RWPE1 (cell line): ENCODE measurements at regions of chr16 and their contacts with region 1.

Region 1: DNA sequence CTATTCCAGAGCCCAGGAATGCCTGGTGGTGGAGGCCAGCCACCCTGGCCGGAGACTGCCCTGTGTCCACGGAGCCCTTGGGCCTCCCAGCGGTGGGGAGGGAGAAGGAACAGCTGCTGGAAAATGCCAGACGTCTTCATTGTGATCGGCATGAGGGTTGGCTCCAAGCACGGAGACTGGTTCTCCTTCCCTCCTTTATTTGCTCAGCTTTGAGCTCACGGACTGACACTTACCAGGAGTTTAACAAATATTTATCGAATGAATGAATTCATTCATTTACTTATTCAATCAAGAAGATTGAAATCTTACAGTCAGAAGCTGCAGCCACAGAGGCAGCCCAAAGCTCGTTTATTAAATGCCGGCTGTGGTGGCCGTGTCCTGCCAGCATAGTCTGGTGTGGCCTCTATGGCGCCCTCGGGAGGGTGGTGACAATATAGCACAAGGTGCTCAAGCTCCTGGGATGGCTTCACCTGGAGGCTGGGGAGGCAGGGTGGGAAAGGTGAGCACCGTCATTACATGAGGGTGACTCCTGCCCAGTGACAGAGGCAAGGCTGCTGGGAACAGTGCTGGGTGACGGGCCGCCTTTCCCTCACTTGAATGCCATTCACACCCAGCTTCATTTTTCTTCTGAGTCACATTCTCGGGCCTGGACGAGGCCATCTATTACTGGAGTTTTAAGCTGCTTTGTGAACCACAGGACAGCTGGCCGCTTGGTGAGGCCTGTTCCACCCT is 31.0 kb upstream of the JPH3 start:
- DNase-seq: no peak
- H3K27ac ChIP-seq: no peak overlapping the region
- CTCF ChIP-seq: peak; percentile 22

Region 2: GRCh38 chr16:87375426-87376135 is 195.7 kb before region 1 on chr16:
- CTCF ChIA-PET with region 1: no interaction called
- POLR2A ChIA-PET with region 1: no interaction called
- DNase-seq: peak; percentile 58
- H3K27ac ChIP-seq: peak overlapping the region; percentile 96
- CTCF ChIP-seq: no peak

Region 3: DNA sequence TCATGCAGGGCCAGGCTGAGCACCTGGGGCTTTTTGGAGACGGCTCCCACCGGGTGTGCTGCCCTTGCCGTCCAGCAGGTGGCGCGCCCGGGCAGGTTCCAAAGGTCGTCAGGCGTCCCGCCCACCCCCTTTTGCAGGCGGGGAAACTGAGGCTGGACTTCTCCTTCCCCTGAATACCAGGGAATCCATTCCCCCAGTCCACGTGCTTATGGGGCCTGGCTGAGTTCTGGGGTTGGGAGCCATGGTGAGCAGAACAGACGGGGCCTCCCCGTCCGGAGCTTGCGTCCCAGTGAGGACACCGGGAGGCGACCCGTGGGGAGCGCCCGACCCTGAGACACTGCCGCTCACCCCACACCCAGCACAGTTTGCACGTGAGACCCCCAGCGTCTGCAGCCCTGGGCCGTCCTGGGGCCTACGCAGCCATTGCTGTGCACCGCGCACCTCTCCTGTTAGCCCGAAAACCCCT is 20.8 kb before region 1 on chr16:
- CTCF ChIA-PET with region 1: interaction called, 11 read pairs
- POLR2A ChIA-PET with region 1: no interaction called
- DNase-seq: peak; percentile 51
- H3K27ac ChIP-seq: no peak overlapping the region
- CTCF ChIP-seq: peak; percentile 95